ENCODE measurements at regions of chr2 and their contacts with region 1.

Region 1: DNA sequence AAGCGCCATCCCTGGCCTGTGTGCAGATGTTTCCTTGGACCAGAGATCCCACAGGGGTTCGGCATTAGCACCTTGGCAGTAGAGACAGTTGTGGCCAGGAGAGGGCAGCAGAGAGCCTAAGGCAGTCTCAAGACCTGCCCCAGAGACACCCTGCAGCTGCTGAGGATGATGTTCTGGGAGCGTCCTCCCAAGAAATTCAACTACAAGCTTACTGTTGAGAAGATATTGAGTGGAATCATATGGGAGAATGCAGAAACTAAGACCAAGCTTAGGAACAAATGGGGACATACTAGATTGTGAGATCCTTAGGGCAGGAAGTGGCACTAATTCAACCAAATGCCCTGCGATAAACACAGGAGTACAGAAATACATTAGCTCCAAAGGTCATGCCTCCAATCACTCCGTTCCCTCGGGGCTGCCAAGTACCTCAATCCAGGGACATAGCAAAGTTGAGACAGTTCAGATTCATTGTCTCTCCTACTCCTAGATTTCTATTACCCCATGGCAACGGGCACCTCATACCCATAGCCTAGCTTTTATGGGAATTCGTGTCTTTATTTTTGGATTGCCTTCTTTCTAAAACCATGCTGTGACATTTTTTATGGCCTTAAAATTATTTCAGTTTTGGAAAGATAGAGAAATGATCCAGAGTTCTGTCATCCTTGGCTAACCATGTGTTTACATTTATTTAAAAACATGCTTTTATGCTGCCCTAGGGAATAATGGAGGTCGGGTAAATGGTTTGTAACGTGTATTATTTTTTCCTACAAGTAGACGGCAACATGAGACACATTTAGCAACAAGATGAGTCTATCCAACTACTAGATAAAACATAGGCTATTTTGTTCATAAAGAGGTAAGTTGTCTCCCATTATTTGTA is 2.2 kb upstream of the ERMN start:
- DNase-seq: peak; percentile 61 to 94 (median 81)
- ATAC-seq: peak; percentile 86 to 92 (median 91)
- H3K4me3 ChIP-seq: no peak overlapping the region
- H3K4me3 Mint-ChIP-seq: peak overlapping the region; percentile 40 to 55 (median 55)
- H3K27ac ChIP-seq: peak overlapping the region; percentile 44
- H3K27ac Mint-ChIP-seq: peak overlapping the region; percentile 87 to 91
- H3K4me1 ChIP-seq: peaks cover 33 to 39% of the 10 kb centered on the region in 2 experiments
- H3K4me1 Mint-ChIP-seq: peaks cover 54 to 56% (median 54%) of the 10 kb centered on the region in 3 donors
- H3K27me3 ChIP-seq: no peaks in the 10 kb centered on the region
- H3K27me3 Mint-ChIP-seq: no peaks in the 10 kb centered on the region

Region 2: GRCh38 chr2:157349949-157350515 is 22.2 kb after region 1 on chr2:
- CTCF ChIA-PET with region 1: interaction called, 7 to 10 read pairs
- POLR2A ChIA-PET with region 1: interaction called in 1 of 2 experiments, 4 read pairs
- DNase-seq: no peak
- ATAC-seq: no peak
- H3K4me3 ChIP-seq: no peak overlapping the region
- H3K4me3 Mint-ChIP-seq: no peak overlapping the region
- H3K27ac ChIP-seq: no peak overlapping the region
- H3K27ac Mint-ChIP-seq: no peak overlapping the region
- H3K4me1 ChIP-seq: peaks cover 0 to 10% of the 10 kb centered on the region in 2 experiments
- H3K4me1 Mint-ChIP-seq: peaks cover 55 to 68% (median 57%) of the 10 kb centered on the region in 3 donors
- H3K27me3 ChIP-seq: no peaks in the 10 kb centered on the region
- H3K27me3 Mint-ChIP-seq: no peaks in the 10 kb centered on the region

Region 3: GRCh38 chr2:157413326-157414035 is 85.6 kb after region 1 on chr2:
- CTCF ChIA-PET with region 1: interaction called, 11 to 13 read pairs
- POLR2A ChIA-PET with region 1: interaction called, 3 to 6 read pairs
- DNase-seq: peak in 32 of 35 experiments; percentile 37 to 83 (median 63)
- ATAC-seq: peak; percentile 81 to 88 (median 85)
- H3K4me3 ChIP-seq: no peak overlapping the region
- H3K4me3 Mint-ChIP-seq: peak overlapping the region; percentile 47 to 64 (median 54)
- H3K27ac ChIP-seq: peak overlapping the region; percentile 91
- H3K27ac Mint-ChIP-seq: peak overlapping the region; percentile 96 to 99
- H3K4me1 ChIP-seq: peaks cover 39 to 91% of the 10 kb centered on the region in 2 experiments
- H3K4me1 Mint-ChIP-seq: peaks cover 89 to 93% (median 93%) of the 10 kb centered on the region in 3 donors
- H3K27me3 ChIP-seq: no peaks in the 10 kb centered on the region
- H3K27me3 Mint-ChIP-seq: no peaks in the 10 kb centered on the region

Region 4: DNA sequence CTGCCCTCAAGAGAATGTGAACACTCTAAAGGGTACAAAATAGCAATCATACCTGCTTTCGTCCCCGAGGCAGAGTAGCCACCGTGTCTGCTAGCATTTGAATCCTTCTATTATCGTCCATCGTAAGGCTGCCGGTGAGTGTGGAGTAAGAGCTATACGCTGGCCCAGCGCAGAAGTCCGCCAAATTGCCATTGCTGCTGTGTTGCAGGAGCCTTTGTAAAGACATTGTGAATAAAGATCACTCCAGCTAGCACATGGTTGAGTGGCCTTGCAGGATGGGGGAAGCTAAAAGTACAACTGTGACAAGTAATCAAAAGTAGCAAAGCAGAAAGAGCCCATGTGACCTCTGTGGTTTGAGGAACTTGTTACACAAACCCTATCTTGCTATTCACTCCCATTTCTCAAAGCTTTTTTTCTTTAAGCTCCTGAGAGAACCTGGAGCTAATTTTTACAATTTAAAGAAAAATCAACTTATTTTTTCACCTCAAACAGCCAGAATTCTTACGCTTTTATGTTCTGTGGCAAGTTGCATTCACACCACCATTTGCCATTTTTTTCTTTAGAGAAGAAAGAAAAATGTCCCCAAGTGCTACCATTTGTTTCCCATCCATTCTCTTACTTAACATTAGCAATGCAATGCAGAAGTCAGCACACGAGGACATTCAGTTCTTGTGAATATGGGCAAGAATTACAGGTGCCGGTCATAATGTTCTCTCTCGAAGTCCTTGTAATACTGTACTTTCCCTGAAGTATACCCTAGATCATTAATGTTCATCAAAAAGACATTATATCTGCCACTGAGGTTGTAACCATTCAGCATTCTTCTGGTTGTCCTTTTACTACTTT is 116.2 kb after region 1 on chr2 and contains the start of gene CYTIP:
- CTCF ChIA-PET with region 1: interaction called, 4 to 15 read pairs
- POLR2A ChIA-PET with region 1: interaction called, 4 to 10 read pairs
- DNase-seq: peak in 32 of 35 experiments; percentile 28 to 83 (median 54)
- ATAC-seq: peak; percentile 60 to 68 (median 64)
- H3K4me3 ChIP-seq: peak within 1 kb of the TSS; percentile 87 to 94
- H3K4me3 Mint-ChIP-seq: peak within 1 kb of the TSS; percentile 92 to 97 (median 96)
- H3K27ac ChIP-seq: peak within 1 kb of the TSS; percentile 90
- H3K27ac Mint-ChIP-seq: peak within 1 kb of the TSS; percentile 97 to 99
- H3K4me1 ChIP-seq: peaks cover 9 to 37% of the 10 kb centered on the region in 2 experiments
- H3K4me1 Mint-ChIP-seq: peaks cover 41 to 68% (median 45%) of the 10 kb centered on the region in 3 donors
- H3K27me3 ChIP-seq: no peaks in the 10 kb centered on the region
- H3K27me3 Mint-ChIP-seq: no peaks in the 10 kb centered on the region
- total RNA-seq, gene CYTIP: 264 to 465 (median 273) TPM

Region 5: DNA sequence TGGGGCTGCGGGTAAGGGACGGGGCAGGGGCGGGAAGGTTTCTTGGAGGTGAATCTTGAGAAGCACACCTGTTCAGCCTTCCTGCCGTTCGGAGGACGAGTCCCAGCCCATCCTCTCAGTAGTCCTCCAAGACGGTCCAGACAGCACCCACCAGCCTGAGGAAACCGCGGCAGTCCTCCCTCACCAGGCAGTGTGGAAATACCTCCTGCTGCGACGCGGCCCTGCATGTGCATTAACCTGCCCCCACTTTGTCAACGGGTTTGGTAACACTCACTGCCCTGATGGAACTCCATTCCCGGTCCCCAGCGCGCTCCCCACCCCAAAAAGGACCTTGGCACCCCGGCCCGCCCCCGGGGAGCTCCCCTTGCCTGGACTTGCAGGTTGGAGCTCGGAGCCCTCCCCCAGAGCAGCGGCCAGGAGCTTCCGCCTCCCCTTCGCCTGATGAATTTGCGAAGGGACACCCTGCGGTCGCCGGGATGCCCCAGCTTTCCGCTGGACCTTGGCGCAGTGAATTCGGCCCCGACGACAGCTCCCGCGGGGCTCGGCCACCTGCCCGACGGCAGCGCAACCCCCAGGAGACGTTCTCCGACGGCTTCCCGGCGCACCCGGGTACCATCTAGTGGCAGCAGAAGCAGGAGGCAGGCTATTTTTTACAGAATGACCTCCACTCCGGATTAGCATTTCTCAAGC is 269.3 kb after region 1 on chr2:
- CTCF ChIA-PET with region 1: interaction called, 4 to 10 read pairs
- POLR2A ChIA-PET with region 1: no interaction called
- DNase-seq: peak in 34 of 35 experiments; percentile 5 to 65 (median 42)
- ATAC-seq: peak; percentile 72 to 84 (median 75)
- H3K4me3 ChIP-seq: peak overlapping the region; percentile 36 to 60
- H3K4me3 Mint-ChIP-seq: peak overlapping the region; percentile 59 to 63 (median 63)
- H3K27ac ChIP-seq: no peak overlapping the region
- H3K27ac Mint-ChIP-seq: no peak overlapping the region
- H3K4me1 ChIP-seq: peaks cover 0 to 6% of the 10 kb centered on the region in 2 experiments
- H3K4me1 Mint-ChIP-seq: peaks cover 12 to 17% (median 15%) of the 10 kb centered on the region in 3 donors
- H3K27me3 ChIP-seq: peaks cover 0 to 16% of the 10 kb centered on the region in 2 experiments
- H3K27me3 Mint-ChIP-seq: peaks cover 5 to 9% of the 10 kb centered on the region in 2 donors